IMR-90 (cell line): ENCODE measurements at regions of chr9 and their contacts with region 1.

Region 1: DNA sequence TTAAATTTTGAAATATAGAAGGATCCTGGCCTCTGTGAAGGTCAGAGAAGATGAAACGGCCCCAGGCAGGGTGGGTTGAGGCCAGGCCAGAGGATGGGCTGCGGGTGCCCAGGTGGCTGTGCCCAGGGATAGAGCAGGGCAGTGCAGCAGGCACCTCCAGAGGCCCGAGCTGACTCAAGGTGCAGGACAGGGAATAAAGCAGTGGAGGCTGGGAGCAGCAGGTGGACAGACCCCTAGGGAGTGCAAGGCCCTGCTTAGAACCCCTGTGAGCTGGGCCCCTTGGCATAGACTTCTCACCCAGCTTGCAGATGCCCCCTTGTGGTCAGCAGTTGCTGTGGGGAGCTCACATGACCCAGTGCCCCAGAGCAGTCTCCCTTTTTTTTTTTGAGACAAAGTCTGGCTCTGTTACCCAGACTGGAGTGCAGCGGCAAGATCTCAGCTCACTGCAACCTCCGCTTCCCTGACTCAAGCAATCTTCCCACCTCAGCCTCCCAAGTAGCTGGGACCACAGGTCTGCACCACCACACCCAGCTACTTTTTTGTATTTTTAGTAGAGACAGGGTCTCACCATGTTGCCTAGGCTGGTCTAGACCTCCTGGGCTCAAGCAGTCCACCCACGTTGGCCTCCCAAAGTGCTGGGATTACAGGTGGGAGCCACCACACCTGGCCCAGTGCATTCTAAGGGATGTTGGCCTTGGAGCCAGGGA is 118.8 kb downstream of the WNK2 start:
- DNase-seq: peak; percentile 58
- ATAC-seq: peak; percentile 83
- H3K4me3 ChIP-seq: no peak overlapping the region
- H3K27ac ChIP-seq: no peak overlapping the region
- H3K4me1 ChIP-seq: no peaks in the 10 kb centered on the region
- H3K27me3 ChIP-seq: peaks cover 12% of the 10 kb centered on the region; the same call in 1 of the 2 replicates
- CTCF ChIP-seq: peak; percentile 58
- POLR2A ChIP-seq: no peak
- RAD21 ChIP-seq: peak; percentile 58

Region 2: DNA sequence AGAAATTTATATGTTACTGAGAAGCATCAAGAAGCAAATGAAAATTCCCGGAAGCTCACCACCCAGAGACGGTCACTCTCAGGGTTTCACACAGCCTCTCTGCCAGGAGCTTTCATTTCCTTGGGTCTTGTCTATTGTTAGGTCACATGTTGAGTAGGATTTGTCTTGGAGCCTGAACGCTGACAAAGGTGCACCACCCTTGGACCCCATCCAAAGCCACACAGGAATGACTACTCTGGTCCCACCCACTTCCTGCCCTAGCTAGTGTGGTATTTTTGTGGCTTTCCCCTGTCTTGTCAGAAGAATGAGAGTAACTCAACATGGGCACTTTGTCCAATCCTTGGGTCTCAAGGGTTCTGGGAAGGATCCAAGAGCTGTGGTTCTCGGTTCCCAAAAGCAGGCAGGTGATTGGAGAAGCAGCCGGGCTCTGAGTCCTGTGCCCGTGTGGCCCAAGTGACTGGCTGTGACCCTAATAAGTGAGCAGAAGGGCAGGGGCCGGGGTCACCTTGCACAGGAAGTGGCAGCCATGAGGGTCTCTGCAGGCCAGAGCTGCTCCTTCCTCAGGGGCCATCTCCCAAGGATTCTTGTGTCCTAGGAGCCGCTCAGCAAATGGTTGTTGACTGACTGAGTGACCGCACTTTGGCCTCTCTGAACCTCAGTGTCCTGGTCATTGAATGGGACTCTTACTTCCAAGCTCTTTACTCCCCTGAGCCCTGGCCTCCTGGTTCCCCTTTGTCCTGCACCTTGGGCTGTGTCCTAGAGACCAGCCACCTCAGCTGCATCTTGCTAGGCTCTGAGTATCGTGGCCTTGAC is 348.4 kb before region 1 on chr9:
- CTCF ChIA-PET with region 1: interaction called, 5 read pairs
- POLR2A ChIA-PET with region 1: no interaction called
- dilution Hi-C with region 1: no loop called
- in situ Hi-C with region 1: no loop called
- intact Hi-C with region 1: loop called (anchors 1 kb)
- DNase-seq: no peak
- ATAC-seq: no peak
- H3K4me3 ChIP-seq: no peak overlapping the region
- H3K27ac ChIP-seq: no peak overlapping the region
- H3K4me1 ChIP-seq: no peaks in the 10 kb centered on the region
- H3K27me3 ChIP-seq: peaks cover 4% of the 10 kb centered on the region
- CTCF ChIP-seq: no peak
- POLR2A ChIP-seq: no peak
- RAD21 ChIP-seq: no peak

Region 3: DNA sequence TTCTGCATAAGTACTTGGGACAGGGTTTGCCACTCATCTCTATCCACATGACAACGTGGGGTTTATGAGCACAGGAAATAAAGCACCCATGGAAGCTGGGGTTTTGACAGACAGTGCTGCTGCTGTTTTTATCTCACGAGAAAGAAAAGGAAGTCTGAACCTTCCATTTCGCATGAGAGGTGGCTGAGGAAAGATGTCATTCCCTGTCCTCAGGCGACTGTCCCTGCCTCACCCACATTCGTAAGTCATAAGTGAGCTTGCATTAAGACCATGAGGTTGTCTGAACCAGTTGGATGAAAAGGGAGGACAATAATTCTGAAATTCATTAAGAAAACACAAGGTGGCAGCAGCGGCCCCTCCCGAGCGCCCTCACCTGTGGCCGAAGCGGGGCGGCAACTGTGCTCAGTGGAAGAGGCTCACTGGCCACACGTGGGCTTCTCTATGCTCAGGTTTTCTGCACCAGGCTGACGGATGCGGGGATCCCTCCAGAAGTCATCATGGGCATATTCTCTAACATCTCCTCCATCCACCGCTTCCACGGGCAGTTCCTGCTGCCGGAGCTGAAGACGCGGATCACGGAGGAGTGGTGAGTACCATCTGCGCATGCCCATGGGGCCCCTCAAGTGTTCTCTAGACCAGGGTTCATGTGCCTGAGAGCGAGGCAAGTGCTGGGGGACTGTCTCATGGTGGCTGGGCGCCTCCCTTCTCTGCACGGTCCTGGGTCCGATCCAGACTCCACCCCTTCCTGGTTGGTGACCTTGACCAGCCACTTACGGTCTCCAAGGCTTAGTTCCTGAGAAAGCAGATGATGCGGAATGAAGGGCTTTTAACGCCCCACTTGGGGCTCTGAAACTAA is 298.9 kb before region 1 on chr9:
- CTCF ChIA-PET with region 1: no interaction called
- POLR2A ChIA-PET with region 1: no interaction called
- dilution Hi-C with region 1: no loop called
- in situ Hi-C with region 1: loop called (anchors 25 kb)
- intact Hi-C with region 1: loop called (anchors 1 kb)
- DNase-seq: peak; percentile 22
- ATAC-seq: peak; percentile 80
- H3K4me3 ChIP-seq: no peak overlapping the region
- H3K27ac ChIP-seq: no peak overlapping the region
- H3K4me1 ChIP-seq: no peaks in the 10 kb centered on the region
- H3K27me3 ChIP-seq: peaks cover 8% of the 10 kb centered on the region; the same call in 1 of the 2 replicates
- CTCF ChIP-seq: peak; percentile 64
- POLR2A ChIP-seq: no peak
- RAD21 ChIP-seq: peak; percentile 66

Region 4: DNA sequence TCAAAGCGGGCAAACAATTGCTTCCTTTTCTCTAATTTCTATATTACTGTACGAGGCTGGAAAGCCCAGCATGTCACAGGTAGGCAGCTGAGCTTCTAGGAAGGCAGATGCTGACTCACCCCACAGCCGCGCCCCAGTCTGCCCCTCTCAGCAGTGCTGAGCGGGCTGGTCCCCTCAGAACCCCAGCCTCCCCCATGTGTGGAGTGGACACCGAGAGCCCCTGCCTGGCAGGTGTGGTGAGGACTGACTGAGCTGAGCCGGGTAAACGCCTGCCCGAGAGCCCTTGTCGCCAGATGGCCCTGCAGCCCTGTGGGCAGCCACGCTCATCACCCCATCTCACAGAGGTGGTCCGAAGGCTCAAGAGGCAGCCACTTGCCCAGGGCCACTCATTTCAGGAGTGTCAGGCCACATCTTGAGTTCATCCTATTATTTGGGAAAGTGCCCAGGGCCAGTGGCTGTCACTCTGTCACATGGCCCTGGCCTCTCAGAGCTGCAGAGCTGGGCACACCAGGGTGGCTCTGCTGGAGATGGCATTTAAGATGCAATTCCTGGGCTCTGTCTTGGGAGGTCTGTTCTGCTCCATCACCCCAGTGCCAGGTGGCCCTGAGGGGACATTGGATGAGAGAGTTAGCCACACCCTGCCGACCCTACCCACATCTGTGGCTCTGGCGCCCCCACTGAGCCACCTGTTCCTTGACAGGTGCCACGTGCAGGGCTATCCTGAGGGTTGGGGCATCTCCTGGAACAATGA is 194.2 kb before region 1 on chr9:
- CTCF ChIA-PET with region 1: interaction called, 4 read pairs
- POLR2A ChIA-PET with region 1: no interaction called
- dilution Hi-C with region 1: no loop called
- in situ Hi-C with region 1: no loop called
- intact Hi-C with region 1: loop called (anchors 1 kb)
- DNase-seq: no peak
- ATAC-seq: no peak
- H3K4me3 ChIP-seq: no peak overlapping the region
- H3K27ac ChIP-seq: no peak overlapping the region
- H3K4me1 ChIP-seq: no peaks in the 10 kb centered on the region
- H3K27me3 ChIP-seq: no peaks in the 10 kb centered on the region
- CTCF ChIP-seq: no peak
- POLR2A ChIP-seq: no peak
- RAD21 ChIP-seq: no peak

Region 5: DNA sequence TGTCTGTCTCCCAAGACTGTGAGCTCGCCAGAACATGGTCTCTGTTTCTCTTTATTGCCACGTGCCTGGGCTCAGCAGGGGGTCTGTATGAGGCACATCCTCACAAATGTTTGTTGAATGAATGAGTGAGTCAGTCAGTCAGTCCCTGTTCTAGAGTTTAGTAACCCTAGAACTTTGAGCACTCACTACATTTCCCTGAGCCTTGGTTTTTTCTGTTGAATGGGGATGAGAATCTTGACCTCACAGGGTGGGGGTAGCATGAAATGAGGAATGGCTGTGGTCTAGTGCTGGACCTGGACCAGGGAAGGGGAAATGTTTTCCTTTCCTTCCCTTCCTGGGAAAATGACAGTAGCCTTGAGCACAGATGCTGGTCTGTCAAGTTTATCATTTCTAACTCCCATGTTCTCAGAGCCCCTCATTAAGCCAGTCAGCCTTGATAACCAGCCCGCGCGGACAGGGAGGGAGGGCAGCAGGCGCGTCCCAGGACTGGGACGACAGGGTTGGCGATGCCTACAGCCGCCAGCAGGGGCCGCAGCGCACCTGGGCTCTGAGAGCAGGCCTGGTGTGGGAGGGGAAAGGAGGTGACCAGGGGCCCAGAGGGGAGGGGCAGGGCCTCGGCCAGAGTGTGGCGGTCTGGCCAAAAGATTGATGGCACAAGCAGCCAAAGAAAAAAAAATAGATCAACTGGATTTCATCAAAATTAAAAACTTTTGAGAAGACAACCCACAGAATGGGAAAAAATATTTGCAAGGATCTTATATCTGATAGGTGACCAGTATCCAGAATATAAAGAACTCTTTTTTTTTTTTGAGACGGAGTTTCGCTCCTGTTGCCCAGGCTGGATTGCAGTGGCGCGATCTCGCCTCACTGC is 142.9 kb before region 1 on chr9:
- CTCF ChIA-PET with region 1: interaction called, 3 read pairs
- POLR2A ChIA-PET with region 1: no interaction called
- dilution Hi-C with region 1: no loop called
- in situ Hi-C with region 1: loop called (anchors 5 kb)
- intact Hi-C with region 1: loop called (anchors 1 kb)
- DNase-seq: peak; percentile 77
- ATAC-seq: peak; percentile 99
- H3K4me3 ChIP-seq: no peak overlapping the region
- H3K27ac ChIP-seq: no peak overlapping the region; the same call in 1 of the 2 replicates
- H3K4me1 ChIP-seq: peaks cover 3% of the 10 kb centered on the region; the same call in 1 of the 2 replicates
- H3K27me3 ChIP-seq: peaks cover 4% of the 10 kb centered on the region
- CTCF ChIP-seq: peak; percentile 97
- POLR2A ChIP-seq: no peak
- RAD21 ChIP-seq: peak; percentile 94

Region 6: GRCh38 chr9:93193148-93193755 is 109.5 kb before region 1 on chr9:
- CTCF ChIA-PET with region 1: no interaction called
- POLR2A ChIA-PET with region 1: no interaction called
- dilution Hi-C with region 1: no loop called
- in situ Hi-C with region 1: no loop called
- intact Hi-C with region 1: no loop called
- DNase-seq: no peak
- ATAC-seq: no peak
- H3K4me3 ChIP-seq: no peak overlapping the region
- H3K27ac ChIP-seq: no peak overlapping the region
- H3K4me1 ChIP-seq: no peaks in the 10 kb centered on the region
- H3K27me3 ChIP-seq: peaks cover 23% of the 10 kb centered on the region
- CTCF ChIP-seq: no peak
- POLR2A ChIP-seq: no peak
- RAD21 ChIP-seq: no peak

Region 7: GRCh38 chr9:93357649-93358048 is 54.9 kb after region 1 on chr9:
- CTCF ChIA-PET with region 1: no interaction called
- POLR2A ChIA-PET with region 1: no interaction called
- dilution Hi-C with region 1: no loop called
- in situ Hi-C with region 1: no loop called
- intact Hi-C with region 1: no loop called
- DNase-seq: no peak
- ATAC-seq: no peak
- H3K4me3 ChIP-seq: no peak overlapping the region
- H3K27ac ChIP-seq: no peak overlapping the region
- H3K4me1 ChIP-seq: no peaks in the 10 kb centered on the region
- H3K27me3 ChIP-seq: no peaks in the 10 kb centered on the region; the same call in 1 of the 2 replicates
- CTCF ChIP-seq: no peak
- POLR2A ChIP-seq: no peak
- RAD21 ChIP-seq: no peak

Region 8: DNA sequence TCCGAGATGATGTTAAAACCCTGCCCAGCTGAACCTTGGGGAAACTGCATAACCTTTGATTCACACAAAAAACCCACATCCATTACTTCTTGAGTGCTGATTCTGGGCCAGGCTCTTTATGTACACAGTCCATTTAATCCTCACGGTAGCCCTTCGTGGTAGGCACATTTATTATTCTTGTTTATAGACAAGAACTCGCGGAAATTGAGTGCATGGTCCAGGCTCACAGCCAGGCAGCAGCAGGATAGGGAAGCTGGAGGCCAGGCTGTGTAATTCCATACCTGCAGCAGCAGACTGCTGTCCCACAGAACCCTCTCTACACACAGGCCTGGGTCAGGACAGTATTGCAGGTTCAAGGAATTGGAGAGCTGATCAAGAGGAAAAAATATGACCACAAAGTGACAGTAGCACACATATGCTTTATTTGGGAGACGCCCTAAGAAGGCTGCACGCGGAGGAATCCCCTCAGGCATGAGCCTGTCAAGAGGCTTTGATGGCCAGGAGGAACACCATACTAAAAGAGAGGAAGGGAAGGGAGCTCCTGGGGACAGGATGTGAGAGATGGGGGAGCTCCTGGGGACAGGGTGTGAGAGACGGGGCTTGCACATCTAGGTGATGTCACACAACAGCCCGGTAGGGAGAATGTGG is 120.4 kb after region 1 on chr9:
- CTCF ChIA-PET with region 1: no interaction called
- POLR2A ChIA-PET with region 1: no interaction called
- dilution Hi-C with region 1: no loop called
- in situ Hi-C with region 1: loop called (anchors 25 kb)
- intact Hi-C with region 1: no loop called
- DNase-seq: peak; percentile 10
- ATAC-seq: peak; percentile 56
- H3K4me3 ChIP-seq: no peak overlapping the region
- H3K27ac ChIP-seq: no peak overlapping the region
- H3K4me1 ChIP-seq: no peaks in the 10 kb centered on the region
- H3K27me3 ChIP-seq: peaks cover 1% of the 10 kb centered on the region; the same call in 1 of the 2 replicates
- CTCF ChIP-seq: no peak
- POLR2A ChIP-seq: no peak
- RAD21 ChIP-seq: no peak